ENCODE measurements at regions of chr22 and their contacts with region 1.

Region 1: GRCh38 chr22:17057959-17058814 is 26.6 kb upstream of the IL17RA start:
- DNase-seq: no peak
- H3K4me3 ChIP-seq: no peak overlapping the region
- H3K27me3 ChIP-seq: no peaks in the 10 kb centered on the region
- CTCF ChIP-seq: peak; percentile 97

Region 2: DNA sequence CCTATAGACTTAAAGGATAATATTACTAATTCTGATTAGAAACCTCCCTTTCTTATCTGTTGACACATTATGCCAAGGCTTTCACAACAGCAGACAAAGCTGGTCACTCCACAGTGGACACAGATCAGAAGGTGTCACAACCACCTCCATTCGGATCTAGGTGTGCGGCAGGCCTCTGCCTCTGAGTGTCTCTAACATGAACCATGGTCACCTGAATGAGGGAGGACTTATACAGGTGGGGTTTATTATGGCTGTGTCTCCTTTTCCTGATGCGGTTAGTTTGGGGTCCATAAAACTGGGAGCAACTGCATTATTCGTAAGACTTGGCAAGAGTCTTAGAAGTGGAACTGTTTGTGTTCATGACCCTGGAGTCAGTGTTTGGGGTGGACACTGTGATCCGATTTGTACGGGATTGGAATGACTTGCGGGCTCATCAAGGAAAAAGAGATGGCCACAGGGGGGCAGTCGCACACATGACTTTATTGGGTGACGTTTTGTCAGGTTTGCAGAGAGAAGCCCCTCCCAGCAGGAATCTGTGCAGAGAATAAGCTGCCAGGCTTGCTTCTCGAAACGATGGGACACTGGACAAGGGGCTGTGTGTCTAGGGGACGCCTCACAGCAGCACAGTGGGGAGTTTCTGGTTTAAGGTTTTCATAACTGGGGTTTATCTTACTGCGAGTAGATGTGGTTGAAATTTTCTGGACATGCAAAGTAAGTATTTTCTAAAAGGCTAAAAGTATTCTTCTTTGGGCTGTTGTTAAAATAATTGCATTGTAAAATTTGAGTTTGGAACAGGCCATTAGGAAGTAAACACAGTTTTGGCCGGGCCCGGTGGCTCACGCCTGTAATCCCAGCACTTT is 140.8 kb before region 1 on chr22:
- CTCF ChIA-PET with region 1: interaction called, 18 read pairs
- POLR2A ChIA-PET with region 1: no interaction called
- DNase-seq: no peak
- H3K4me3 ChIP-seq: no peak overlapping the region
- H3K27me3 ChIP-seq: no peaks in the 10 kb centered on the region
- CTCF ChIP-seq: peak; percentile 52

Region 3: DNA sequence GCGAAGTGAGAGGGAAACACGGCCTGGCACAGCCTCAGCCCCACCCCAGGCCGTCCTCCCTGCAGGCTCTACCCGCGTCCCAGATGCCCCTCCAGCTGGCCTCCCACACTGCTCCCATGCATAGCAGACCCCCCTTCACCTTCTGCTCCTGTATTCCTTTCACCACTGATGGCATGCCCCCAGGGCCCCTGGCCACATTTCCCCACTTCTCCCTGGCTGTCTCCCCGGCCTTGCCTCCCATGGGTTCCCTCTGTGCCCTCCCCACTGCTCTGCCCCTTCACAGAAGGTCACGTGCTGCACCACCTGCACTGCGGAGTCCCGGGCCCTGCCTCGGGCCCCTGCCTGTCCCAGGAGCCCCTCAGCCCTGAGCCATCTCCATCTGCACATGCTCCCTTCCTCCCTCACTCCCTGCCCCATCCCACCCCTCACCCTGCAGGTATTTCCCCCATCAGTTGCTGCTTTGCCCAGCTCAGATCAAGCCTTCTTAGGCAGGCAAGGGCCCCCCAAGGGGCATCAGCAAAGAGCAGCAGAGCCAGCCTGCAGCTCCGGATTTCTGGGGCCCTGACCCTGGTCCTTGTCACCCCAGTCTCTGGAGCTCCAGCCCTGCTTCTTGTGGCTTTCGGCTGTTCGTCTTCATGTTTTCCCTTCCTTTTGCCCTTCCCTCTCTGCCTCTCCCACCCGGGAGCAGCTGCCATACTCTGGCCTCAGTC is 96.6 kb before region 1 on chr22:
- CTCF ChIA-PET with region 1: no interaction called
- POLR2A ChIA-PET with region 1: no interaction called
- DNase-seq: no peak
- H3K4me3 ChIP-seq: no peak overlapping the region
- H3K27me3 ChIP-seq: no peaks in the 10 kb centered on the region
- CTCF ChIP-seq: no peak

Region 4: DNA sequence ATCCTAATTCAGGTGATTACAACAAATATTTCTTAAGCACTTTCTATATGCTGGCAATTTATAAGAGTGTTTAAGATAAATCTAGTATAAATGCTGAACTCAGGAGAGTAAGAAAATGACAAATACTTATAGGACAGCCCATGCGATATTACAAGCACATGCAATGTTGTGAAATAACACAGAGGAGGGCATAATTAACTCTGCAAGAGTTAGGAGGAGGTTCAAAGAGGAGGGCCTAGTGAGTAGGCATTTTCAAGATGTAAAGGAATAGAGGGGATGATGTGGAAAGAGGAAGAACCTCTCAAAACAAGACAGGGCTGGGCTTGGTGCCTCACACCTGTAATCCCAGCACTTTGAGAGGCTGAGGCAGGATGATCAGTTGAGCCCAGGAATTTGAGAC is 10.5 kb before region 1 on chr22:
- CTCF ChIA-PET with region 1: interaction called, 10 read pairs
- POLR2A ChIA-PET with region 1: no interaction called
- DNase-seq: no peak
- H3K4me3 ChIP-seq: no peak overlapping the region
- H3K27me3 ChIP-seq: no peaks in the 10 kb centered on the region
- CTCF ChIP-seq: no peak

Region 5: GRCh38 chr22:17084554-17085276 is 26.5 kb after region 1 on chr22 and contains the start of gene IL17RA:
- CTCF ChIA-PET with region 1: no interaction called
- POLR2A ChIA-PET with region 1: no interaction called
- DNase-seq: no peak
- H3K4me3 ChIP-seq: peak within 1 kb of the TSS; percentile 77
- H3K27me3 ChIP-seq: no peaks in the 10 kb centered on the region
- CTCF ChIP-seq: no peak
- polyA plus RNA-seq, gene IL17RA: 20.7 and 27.0 TPM in 2 replicates

Measured in BJ (cell line).